ENCODE measurements at regions of chr14 and their contacts with region 1.

Region 1: GRCh38 chr14:96567289-96567899 is 65.2 kb downstream of the PAPOLA start:
- DNase-seq: no peak
- H3K4me3 ChIP-seq: no peak overlapping the region
- H3K27me3 ChIP-seq: no peaks in the 10 kb centered on the region
- CTCF ChIP-seq: peak; percentile 56

Region 2: GRCh38 chr14:96538097-96538989 is 29.1 kb before region 1 on chr14:
- CTCF ChIA-PET with region 1: interaction called, 14 read pairs
- POLR2A ChIA-PET with region 1: no interaction called
- DNase-seq: no peak
- H3K4me3 ChIP-seq: no peak overlapping the region
- H3K27me3 ChIP-seq: no peaks in the 10 kb centered on the region
- CTCF ChIP-seq: no peak

Region 3: DNA sequence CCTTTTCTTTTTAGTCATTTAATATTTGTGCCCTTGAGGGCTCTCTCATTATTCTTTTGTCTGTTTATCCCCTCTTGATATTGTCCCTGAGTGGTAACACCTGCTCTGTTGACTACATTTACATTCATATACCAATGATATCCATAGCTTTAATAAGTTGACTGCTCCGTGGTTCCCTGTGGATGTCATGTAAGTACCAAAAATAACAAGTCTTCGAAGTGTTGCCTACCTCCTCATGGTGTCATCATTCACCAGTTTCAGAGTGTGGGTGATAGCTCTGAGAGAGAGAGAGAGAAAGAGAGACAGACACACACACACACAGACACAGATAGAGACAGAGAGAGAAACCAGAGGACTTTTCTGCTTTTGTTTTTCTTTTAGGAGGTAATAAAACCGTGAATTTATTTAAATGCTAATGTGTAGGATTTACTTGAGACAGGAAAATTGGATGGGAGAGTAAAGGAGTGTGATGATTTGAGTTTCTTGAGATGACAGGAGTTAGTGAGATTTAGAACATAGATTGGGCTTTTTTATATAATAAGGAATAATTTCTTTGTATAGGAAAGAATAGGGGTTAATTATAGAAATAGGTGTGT is 13.0 kb before region 1 on chr14:
- CTCF ChIA-PET with region 1: interaction called, 17 read pairs
- POLR2A ChIA-PET with region 1: no interaction called
- DNase-seq: no peak
- H3K4me3 ChIP-seq: no peak overlapping the region
- H3K27me3 ChIP-seq: no peaks in the 10 kb centered on the region
- CTCF ChIP-seq: no peak

Region 4: DNA sequence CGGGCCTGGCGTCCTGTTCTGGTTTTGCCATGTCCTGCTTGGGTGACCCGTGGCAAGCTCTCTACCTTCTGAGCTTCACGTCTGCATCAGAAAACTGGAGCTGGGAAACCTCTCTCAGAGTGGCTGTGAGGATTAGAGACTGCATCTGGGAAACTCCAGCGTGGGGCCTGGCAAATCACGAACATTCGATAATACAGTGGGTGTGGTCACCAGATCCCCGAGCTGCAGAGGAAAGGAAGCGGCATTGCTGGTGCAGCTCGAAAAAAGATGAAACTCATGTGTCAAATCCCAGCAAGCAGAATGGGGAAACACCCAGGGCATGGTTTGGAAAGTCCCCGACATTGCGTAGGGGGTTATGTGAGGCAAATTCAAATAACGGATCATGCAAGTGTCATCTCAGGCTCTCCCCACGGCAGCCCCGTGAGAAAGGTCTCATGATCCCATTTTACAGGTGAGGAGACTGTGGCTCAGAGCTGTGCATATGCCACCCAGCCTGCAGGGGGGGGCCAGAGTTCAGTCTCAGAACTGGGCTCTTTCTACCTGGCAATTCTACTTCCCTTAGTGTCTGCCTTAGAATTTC is 131.7 kb after region 1 on chr14:
- CTCF ChIA-PET with region 1: no interaction called
- POLR2A ChIA-PET with region 1: no interaction called
- DNase-seq: no peak
- H3K4me3 ChIP-seq: no peak overlapping the region
- H3K27me3 ChIP-seq: no peaks in the 10 kb centered on the region
- CTCF ChIP-seq: no peak

Region 5: DNA sequence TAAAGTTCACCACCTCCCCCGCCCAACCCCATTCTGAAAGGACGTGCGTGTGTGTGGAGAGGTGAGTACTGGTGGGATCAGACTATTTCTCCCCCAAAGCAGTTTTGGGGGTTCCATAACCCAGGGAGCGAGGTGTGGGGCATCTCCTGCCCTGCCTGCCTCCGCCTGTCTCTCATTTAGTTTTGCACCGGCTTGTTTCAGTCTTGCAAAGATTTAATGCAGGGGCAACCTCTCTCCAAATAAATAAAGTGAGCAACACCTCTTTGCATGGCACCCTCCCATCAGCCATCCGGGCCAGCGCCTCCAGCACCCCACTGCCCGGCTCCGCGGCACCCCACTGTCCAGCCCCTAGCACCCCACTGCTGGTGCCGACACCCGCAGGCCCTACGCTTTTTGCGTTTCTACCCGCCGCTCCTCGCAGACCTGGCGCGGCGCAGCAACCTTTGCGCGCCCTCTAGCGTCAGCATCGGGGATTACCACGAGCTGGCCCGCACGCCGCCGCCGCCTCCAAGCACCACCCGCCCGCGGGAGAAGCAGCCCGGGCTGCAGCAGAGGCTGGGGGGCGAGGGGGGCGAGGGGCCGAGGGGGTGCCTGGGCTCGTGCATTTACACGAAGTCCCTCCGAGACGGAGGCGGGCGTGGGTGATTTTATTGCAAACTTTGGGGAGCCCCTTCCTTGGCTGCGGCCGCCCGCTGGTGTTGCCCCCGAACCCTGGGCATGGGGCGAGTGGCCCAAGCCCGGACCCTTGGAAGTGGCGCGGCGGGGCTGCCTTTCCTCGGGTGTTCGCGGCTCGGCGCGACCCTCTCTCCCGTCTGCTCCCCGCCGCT is 174.0 kb after region 1 on chr14:
- CTCF ChIA-PET with region 1: interaction called, 24 read pairs
- POLR2A ChIA-PET with region 1: no interaction called
- DNase-seq: no peak
- H3K4me3 ChIP-seq: peak overlapping the region; percentile 37
- H3K27me3 ChIP-seq: peaks cover 13% of the 10 kb centered on the region
- CTCF ChIP-seq: peak; percentile 83

Measured in BJ (cell line).